ENCODE measurements at regions of chr2 and their contacts with region 1.

Region 1: DNA sequence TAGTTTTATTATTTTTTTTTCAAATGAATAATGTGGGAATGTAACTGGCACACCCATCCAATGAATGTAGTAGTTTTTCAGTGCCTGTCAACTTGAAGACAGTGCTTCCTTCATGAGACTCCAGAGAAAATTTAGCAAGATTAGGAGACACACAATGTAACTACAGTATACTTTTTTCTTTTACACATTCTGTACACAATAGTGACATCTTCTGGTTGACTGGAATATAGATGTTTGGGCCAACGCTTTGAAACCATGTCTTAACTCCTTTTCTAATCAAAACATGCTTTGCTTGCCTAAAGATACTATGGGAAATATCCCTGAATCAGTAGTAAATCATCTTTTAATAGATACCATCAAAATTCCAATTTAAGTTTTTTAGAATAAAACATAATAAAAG is 229.5 kb upstream of the ZC3H15 start:
- DNase-seq: peak; percentile 76
- ATAC-seq: peak; percentile 78
- H3K4me3 ChIP-seq: no peak overlapping the region
- H3K27ac ChIP-seq: no peak overlapping the region
- H3K4me1 ChIP-seq: no peaks in the 10 kb centered on the region
- H3K27me3 ChIP-seq: no peaks in the 10 kb centered on the region
- CTCF ChIP-seq: peak; percentile 88

Region 2: GRCh38 chr2:185291035-185291647 is 965.4 kb before region 1 on chr2:
- CTCF ChIA-PET with region 1: no interaction called
- POLR2A ChIA-PET with region 1: no interaction called
- intact Hi-C with region 1: loop called (anchors 1 kb)
- DNase-seq: peak; percentile 79
- ATAC-seq: peak; percentile 100
- H3K4me3 ChIP-seq: no peak overlapping the region
- H3K27ac ChIP-seq: no peak overlapping the region
- H3K4me1 ChIP-seq: no peaks in the 10 kb centered on the region
- H3K27me3 ChIP-seq: no peaks in the 10 kb centered on the region
- CTCF ChIP-seq: peak; percentile 76

Region 3: GRCh38 chr2:185738679-185739472 is 517.7 kb before region 1 on chr2 and contains the start of gene FSIP2:
- CTCF ChIA-PET with region 1: no interaction called
- POLR2A ChIA-PET with region 1: no interaction called
- intact Hi-C with region 1: loop called (anchors 1 kb)
- DNase-seq: peak; percentile 62
- ATAC-seq: peak; percentile 95
- H3K4me3 ChIP-seq: peak within 1 kb of the TSS; percentile 43; the same call in 1 of the 2 replicates
- H3K27ac ChIP-seq: no peak within 1 kb of the TSS
- H3K4me1 ChIP-seq: no peaks in the 10 kb centered on the region
- H3K27me3 ChIP-seq: no peaks in the 10 kb centered on the region
- CTCF ChIP-seq: peak; percentile 60
- total RNA-seq, gene FSIP2: 2.0 and 2.5 TPM in 2 replicates

Region 4: DNA sequence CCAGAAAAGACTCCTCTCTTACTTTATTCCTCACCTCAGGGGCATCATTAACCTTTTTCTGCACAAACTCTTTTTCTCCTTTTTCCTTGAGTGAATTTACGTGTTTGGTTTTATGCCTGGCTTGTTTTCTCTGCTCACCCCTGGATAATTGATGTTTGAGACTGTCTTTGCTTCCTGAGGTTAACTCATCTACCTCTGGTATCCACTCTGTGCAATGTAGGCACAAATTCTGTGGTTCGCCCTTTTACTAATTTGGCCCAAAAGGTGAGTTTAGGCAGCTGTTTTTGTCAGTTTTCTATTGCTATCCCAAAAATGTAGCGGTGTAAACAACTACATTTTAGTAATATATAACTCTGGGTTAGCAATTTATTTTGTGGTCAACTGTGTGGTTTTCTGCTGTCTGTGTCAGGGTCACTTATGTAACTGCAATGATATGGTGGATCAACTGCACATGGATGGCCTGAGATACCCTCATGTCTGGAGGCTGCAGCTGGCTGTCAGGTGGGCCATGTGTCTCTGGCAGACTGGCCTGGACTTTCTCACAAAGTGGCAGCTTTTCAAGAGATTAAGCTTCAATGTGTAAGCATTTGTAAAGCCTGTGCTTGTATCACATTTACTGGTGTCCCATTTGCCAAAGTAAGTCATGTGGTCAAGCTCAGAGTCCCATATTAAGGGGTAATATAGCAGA is 188.3 kb before region 1 on chr2:
- CTCF ChIA-PET with region 1: no interaction called
- POLR2A ChIA-PET with region 1: no interaction called
- intact Hi-C with region 1: loop called (anchors 10 kb)
- DNase-seq: no peak
- ATAC-seq: no peak
- H3K4me3 ChIP-seq: no peak overlapping the region
- H3K27ac ChIP-seq: no peak overlapping the region
- H3K4me1 ChIP-seq: no peaks in the 10 kb centered on the region
- H3K27me3 ChIP-seq: no peaks in the 10 kb centered on the region
- CTCF ChIP-seq: no peak

Region 5: GRCh38 chr2:186167140-186167539 is 89.4 kb before region 1 on chr2:
- CTCF ChIA-PET with region 1: no interaction called
- POLR2A ChIA-PET with region 1: no interaction called
- intact Hi-C with region 1: no loop called
- DNase-seq: peak; percentile 14
- ATAC-seq: no peak
- H3K4me3 ChIP-seq: no peak overlapping the region
- H3K27ac ChIP-seq: no peak overlapping the region
- H3K4me1 ChIP-seq: no peaks in the 10 kb centered on the region
- H3K27me3 ChIP-seq: no peaks in the 10 kb centered on the region
- CTCF ChIP-seq: peak; percentile 35

Region 6: DNA sequence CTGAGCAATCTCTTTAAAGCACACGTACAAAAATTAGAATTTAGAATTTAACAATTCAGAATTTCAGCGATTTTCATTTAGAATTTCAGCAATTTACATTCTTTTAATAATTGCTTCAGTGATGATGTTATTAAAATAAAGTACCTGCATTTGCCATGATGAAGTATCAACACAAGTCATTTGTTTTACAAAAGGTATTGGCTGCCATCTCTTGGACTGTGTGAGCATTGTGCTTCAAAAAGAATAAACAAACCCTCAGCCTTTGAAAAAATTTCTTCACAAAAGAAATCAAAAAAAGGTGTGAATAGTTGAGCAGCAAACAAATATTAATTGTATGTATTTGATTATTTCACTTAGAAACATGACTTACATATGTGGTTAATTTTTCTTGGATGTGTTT is 202.5 kb after region 1 on chr2:
- CTCF ChIA-PET with region 1: no interaction called
- POLR2A ChIA-PET with region 1: no interaction called
- intact Hi-C with region 1: loop called (anchors 2 kb)
- DNase-seq: peak; percentile 68
- ATAC-seq: peak; percentile 50
- H3K4me3 ChIP-seq: no peak overlapping the region
- H3K27ac ChIP-seq: no peak overlapping the region
- H3K4me1 ChIP-seq: peaks cover 16% of the 10 kb centered on the region
- H3K27me3 ChIP-seq: no peaks in the 10 kb centered on the region
- CTCF ChIP-seq: peak; percentile 75

Measured in PC-3 (cell line).